Activated T-helper 1 cell treated with anti-CD3 and anti-CD28 coated beads, Interleukin-12 subunit alpha, Interleukin-12 subunit beta, Interleukin-2, Interleukin-4 antibody, amounts not matched to agents 30 ng/mL and 10 ng/mL and 1 ng/mL, durations not matched to agents 14 hours and 24 hours and 36 hours (primary cell): ENCODE measurements at regions of chr7 and their contacts with region 1.

Region 1: DNA sequence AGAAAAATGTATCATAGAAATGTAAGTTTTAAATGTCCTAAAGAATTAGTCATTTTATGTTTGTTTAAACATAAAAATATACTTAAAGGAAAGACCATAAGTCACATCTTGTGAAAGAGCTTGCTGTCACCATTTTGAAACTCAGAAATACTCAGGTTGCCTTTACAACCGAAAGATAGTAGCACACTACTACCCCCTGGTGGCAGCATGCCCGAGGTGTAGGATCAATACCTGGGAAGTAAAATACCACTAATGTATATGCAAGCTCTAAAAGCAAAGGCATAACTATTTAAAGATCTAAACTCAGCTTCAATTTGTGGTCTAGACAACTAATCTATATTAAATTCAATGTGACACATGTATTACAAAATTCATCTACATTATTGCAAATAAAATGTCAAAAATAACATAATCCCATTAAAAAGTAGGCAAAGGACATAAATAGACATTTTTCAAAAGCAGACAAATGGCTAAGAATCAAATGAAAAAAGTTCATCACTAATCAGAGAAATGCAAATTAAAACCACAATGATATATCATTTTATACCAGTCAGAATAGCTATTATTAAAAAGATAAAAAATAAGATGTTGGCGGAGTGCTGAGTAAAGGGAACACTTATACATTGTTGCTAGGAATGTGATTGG is 47.7 kb upstream of the FGL2 start:
- DNase-seq: peak; percentile 79
- H3K4me3 Mint-ChIP-seq: no peak overlapping the region
- H3K27ac Mint-ChIP-seq: no peak overlapping the region
- H3K4me1 Mint-ChIP-seq: peaks cover 20% of the 10 kb centered on the region
- H3K27me3 Mint-ChIP-seq: peaks cover 19% of the 10 kb centered on the region

Region 2: GRCh38 chr7:77199013-77199966 is 48.0 kb before region 1 on chr7 and contains the start of gene FGL2:
- intact Hi-C with region 1: loop called (anchors 5 kb)
- DNase-seq: no peak
- H3K4me3 Mint-ChIP-seq: peak within 1 kb of the TSS; percentile 89
- H3K27ac Mint-ChIP-seq: peak within 1 kb of the TSS; percentile 47
- H3K4me1 Mint-ChIP-seq: peaks cover 54% of the 10 kb centered on the region
- H3K27me3 Mint-ChIP-seq: no peaks in the 10 kb centered on the region
- total RNA-seq, gene FGL2: 4.0 and 4.7 TPM in 2 replicates

Region 3: DNA sequence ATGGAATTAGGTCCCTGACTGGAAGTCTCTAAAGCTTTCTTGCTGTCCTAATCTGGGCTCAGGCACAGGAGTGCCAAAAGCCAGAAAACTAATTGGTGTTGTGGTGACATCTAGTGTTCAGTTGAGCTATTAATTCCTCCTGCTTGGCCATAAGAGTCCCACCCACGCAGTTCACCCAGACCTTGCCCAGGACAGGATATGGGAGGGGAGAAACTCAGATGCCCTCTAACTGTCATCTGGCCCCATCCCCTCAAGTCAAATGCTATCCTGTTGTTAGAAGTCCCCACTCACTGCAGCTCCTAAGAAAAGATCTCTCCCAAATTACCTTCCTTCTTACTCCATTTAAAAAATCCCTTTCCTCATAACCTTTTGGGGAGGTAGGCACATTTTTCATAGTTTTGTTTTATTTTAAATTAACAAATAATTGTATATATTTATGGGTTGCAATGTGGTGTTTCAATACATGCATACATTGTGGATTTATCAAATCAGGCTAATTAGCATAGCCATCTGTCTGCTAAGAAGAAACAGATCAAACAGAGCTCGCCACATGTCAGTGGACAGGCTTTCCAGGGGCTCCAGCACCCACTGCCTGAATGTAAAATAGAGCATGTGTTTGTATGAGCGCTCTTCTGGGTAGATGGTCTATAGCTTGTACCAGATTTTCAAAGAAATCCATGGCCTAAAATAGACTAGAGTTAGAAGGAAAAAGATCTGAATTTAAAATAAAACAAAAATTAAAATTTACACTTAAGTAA is 84.8 kb after region 1 on chr7:
- intact Hi-C with region 1: loop called (anchors 1 kb)
- DNase-seq: peak; percentile 44
- H3K4me3 Mint-ChIP-seq: no peak overlapping the region
- H3K27ac Mint-ChIP-seq: no peak overlapping the region
- H3K4me1 Mint-ChIP-seq: peaks cover 48% of the 10 kb centered on the region
- H3K27me3 Mint-ChIP-seq: no peaks in the 10 kb centered on the region